Activated B cell treated with CpG ODN at 0.5 μM for 24 hours (primary cell): ENCODE measurements at regions of chr6 and their contacts with region 1.

Region 1: DNA sequence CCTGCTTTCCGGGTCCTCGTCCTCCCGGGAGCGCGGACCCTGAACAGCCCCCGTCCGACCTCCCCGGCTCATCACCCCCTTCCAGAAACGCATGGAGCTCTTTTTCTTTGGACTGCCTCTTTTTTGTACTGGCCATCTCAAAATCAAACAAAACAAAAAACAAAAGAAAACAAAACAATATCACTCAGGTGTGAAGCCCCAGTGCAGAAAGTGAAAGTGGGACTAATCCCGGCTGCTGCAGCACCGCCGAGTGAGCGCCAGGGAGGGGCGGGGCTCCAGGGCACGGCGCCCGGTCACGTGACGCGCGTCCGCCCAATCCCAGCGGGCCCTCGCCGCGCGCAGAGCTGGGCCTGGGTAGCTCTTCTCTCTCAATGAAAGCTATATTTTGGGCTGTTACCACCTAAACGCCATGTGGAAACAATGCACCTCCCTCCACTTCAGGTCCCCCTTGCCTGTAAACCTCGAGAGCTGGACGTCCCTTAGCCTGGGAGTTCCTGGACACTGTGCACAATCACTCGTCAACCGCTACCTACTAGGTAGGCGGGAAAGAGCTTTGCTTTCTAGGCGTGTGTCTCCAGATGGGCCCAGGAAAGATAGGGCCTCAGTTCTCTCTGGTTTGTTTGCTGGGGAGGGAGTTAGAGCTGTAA is 93.7 kb upstream of the PRDM1 start:
- DNase-seq: peak; percentile 88
- ATAC-seq: peak; percentile 92
- H3K4me3 Mint-ChIP-seq: peak overlapping the region; percentile 96
- H3K27ac Mint-ChIP-seq: peak overlapping the region; percentile 97
- H3K4me1 Mint-ChIP-seq: peaks cover 24% of the 10 kb centered on the region
- H3K27me3 Mint-ChIP-seq: peaks cover 21% of the 10 kb centered on the region
- CTCF ChIP-seq: no peak

Region 2: DNA sequence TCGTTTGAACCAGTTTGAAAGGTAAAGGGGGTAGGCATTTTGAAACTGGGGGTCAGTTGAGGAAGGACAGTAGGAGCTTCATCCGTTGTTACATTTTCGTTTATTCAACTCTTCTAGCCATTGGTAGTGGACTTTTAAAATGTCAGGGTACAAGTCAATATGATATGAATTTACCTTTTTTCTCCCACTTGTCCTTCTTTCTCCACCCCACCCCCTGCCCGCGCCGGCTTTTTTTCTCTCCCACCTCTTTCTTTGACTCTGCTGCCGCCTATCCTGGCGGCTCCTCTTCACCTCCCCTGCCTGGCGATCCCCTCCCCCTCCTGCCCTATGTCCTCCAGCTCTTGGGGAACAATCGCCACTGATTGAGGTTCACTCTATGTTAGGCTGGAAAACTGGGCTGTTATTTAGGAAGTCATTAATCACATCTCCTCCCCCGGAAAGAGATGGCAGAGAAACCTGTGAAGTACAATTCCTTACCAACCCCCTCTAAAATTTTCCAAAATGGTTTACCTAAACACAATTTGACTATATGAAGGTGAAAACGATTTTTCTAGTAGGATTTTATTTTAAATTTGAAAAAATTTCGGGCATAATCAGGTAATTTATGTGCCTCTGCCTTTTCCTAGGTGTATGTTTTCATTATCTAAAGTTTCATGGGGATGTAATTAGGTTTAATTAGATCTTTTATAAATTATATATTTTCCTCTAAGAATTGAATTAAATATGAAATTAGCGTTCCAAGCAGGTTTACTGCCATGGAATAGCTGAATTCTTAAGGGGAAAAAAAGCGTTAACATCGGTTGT is 1036.3 kb before region 1 on chr6:
- CTCF ChIA-PET with region 1: no interaction called
- POLR2A ChIA-PET with region 1: no interaction called
- intact Hi-C with region 1: loop called (anchors 10 kb)
- DNase-seq: no peak
- ATAC-seq: no peak
- H3K4me3 Mint-ChIP-seq: no peak overlapping the region
- H3K27ac Mint-ChIP-seq: no peak overlapping the region
- H3K4me1 Mint-ChIP-seq: peaks cover 7% of the 10 kb centered on the region
- H3K27me3 Mint-ChIP-seq: peaks cover 51% of the 10 kb centered on the region
- CTCF ChIP-seq: no peak

Region 3: GRCh38 chr6:105793130-105793529 is 199.3 kb before region 1 on chr6:
- CTCF ChIA-PET with region 1: interaction called, 3 read pairs
- POLR2A ChIA-PET with region 1: interaction called, 3 read pairs
- intact Hi-C with region 1: loop called (anchors 2 kb)
- DNase-seq: no peak
- ATAC-seq: peak; percentile 88
- H3K4me3 Mint-ChIP-seq: no peak overlapping the region
- H3K27ac Mint-ChIP-seq: no peak overlapping the region
- H3K4me1 Mint-ChIP-seq: peaks cover 20% of the 10 kb centered on the region
- H3K27me3 Mint-ChIP-seq: no peaks in the 10 kb centered on the region
- CTCF ChIP-seq: no peak

Region 4: GRCh38 chr6:105880030-105880492 is 112.4 kb before region 1 on chr6:
- CTCF ChIA-PET with region 1: no interaction called
- POLR2A ChIA-PET with region 1: interaction called, 6 read pairs
- intact Hi-C with region 1: loop called (anchors 5 kb)
- DNase-seq: no peak
- ATAC-seq: peak; percentile 63
- H3K4me3 Mint-ChIP-seq: peak overlapping the region; percentile 52
- H3K27ac Mint-ChIP-seq: peak overlapping the region; percentile 61
- H3K4me1 Mint-ChIP-seq: peaks cover 66% of the 10 kb centered on the region
- H3K27me3 Mint-ChIP-seq: no peaks in the 10 kb centered on the region
- CTCF ChIP-seq: no peak

Region 5: GRCh38 chr6:106097411-106098231 is 105.2 kb after region 1 on chr6:
- CTCF ChIA-PET with region 1: no interaction called
- POLR2A ChIA-PET with region 1: interaction called, 41 read pairs
- intact Hi-C with region 1: loop called (anchors 1 kb)
- DNase-seq: no peak
- ATAC-seq: peak; percentile 74
- H3K4me3 Mint-ChIP-seq: peak overlapping the region; percentile 89
- H3K27ac Mint-ChIP-seq: peak overlapping the region; percentile 94
- H3K4me1 Mint-ChIP-seq: peaks cover 84% of the 10 kb centered on the region
- H3K27me3 Mint-ChIP-seq: no peaks in the 10 kb centered on the region
- CTCF ChIP-seq: no peak

Region 6: DNA sequence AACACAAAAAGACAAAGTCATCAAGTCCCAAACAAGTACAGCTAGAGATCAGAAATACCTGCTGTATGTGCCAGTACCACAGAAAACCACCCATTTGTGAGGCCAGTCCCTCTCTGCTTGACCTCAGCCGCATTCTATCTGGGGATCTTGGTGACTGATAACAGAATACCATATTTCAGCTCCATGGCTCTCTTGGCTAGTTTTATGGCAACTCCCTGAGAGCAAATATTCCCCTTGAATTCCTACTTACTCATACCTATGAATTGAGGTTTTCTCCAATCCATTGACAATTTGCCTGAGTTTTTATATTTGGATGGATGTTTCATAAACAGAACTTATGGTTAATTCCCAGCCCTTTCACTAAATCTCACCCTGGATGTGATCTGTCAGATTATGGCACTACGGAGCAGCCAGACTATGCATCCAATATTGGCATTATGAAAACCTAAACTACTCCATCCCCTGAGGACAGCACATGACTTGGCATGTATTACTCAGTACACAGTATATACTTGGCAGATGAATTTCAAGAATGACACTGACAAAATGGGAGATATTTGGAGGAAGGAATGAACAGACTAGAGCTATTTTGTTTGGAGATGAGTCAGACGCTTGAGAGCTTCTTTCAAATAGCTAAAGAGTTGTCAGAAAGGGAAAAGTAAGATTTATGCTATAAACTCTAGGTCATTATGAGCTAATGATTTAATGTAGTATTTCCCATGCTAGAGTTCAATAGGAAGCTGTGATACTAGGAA is 189.4 kb after region 1 on chr6:
- CTCF ChIA-PET with region 1: no interaction called
- POLR2A ChIA-PET with region 1: no interaction called
- intact Hi-C with region 1: loop called (anchors 5 kb)
- DNase-seq: no peak
- ATAC-seq: peak; percentile 41
- H3K4me3 Mint-ChIP-seq: no peak overlapping the region
- H3K27ac Mint-ChIP-seq: peak overlapping the region; percentile 78
- H3K4me1 Mint-ChIP-seq: peaks cover 30% of the 10 kb centered on the region
- H3K27me3 Mint-ChIP-seq: no peaks in the 10 kb centered on the region
- CTCF ChIP-seq: no peak

Region 7: GRCh38 chr6:106325336-106326178 is 333.1 kb after region 1 on chr6 and contains the start of gene ATG5:
- CTCF ChIA-PET with region 1: no interaction called
- POLR2A ChIA-PET with region 1: interaction called, 3 read pairs
- intact Hi-C with region 1: loop called (anchors 5 kb)
- DNase-seq: peak; percentile 99
- ATAC-seq: peak; percentile 93
- H3K4me3 Mint-ChIP-seq: peak within 1 kb of the TSS; percentile 99
- H3K27ac Mint-ChIP-seq: peak within 1 kb of the TSS; percentile 94
- H3K4me1 Mint-ChIP-seq: peaks cover 42% of the 10 kb centered on the region
- H3K27me3 Mint-ChIP-seq: peaks cover 1% of the 10 kb centered on the region
- CTCF ChIP-seq: no peak
- total RNA-seq, gene ATG5: 29.7 and 30.3 TPM in 2 replicates